Calu3 (cell line): ENCODE measurements at regions of chr3 and their contacts with region 1.

Region 1: DNA sequence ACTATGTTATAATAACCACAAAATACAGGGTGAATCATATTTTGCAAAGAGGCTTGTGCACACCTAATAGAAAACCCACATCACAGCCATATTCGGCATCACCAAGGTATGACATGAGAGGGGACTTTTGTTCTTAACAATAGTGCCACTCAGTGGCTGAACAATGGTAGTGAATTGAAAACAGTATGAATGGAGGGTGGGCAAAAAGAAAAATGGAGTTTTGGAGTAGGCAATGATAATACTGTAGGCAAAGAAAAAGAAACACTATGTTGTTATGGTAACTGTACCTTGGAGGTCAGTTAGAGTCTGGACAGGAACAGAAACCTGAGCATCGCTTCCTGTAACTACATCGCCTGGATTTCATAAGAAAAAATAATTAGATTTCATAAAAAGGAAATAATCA is 348.6 kb downstream of the PLCL2 start:
- DNase-seq: peak; percentile 20
- H3K4me3 Mint-ChIP-seq: no peak overlapping the region
- H3K27ac Mint-ChIP-seq: no peak overlapping the region
- H3K4me1 Mint-ChIP-seq: no peaks in the 10 kb centered on the region
- H3K27me3 Mint-ChIP-seq: no peaks in the 10 kb centered on the region
- CTCF ChIP-seq: peak; percentile 40

Region 2: DNA sequence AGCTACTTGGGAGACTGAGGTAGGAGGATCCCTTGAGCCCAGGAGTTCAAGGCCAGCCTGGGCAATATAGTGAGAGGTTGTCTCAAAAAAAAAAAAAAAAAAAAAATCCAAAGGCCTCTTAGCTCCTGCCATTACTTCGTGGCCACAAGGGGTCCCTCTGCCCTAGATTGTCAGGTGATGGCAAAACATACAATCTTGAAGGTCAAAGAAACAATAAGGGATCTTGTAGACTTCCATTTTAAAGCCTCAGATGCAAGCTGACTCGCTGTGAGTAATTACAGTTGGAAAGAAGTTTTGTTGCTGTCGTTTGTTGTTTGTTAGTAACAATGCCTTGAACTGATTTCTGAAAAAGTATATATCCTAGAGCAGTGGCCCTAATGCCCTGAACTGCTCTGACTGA is 404.6 kb before region 1 on chr3:
- CTCF ChIA-PET with region 1: no interaction called
- intact Hi-C with region 1: loop called (anchors 1 kb)
- DNase-seq: peak; percentile 47
- H3K4me3 Mint-ChIP-seq: no peak overlapping the region
- H3K27ac Mint-ChIP-seq: no peak overlapping the region
- H3K4me1 Mint-ChIP-seq: no peaks in the 10 kb centered on the region
- H3K27me3 Mint-ChIP-seq: no peaks in the 10 kb centered on the region
- CTCF ChIP-seq: no peak

Region 3: GRCh38 chr3:16884084-16884747 is 349.2 kb before region 1 on chr3:
- CTCF ChIA-PET with region 1: no interaction called
- intact Hi-C with region 1: loop called (anchors 10 kb)
- DNase-seq: peak; percentile 83
- H3K4me3 Mint-ChIP-seq: peak overlapping the region; percentile 79
- H3K27ac Mint-ChIP-seq: peak overlapping the region; percentile 31
- H3K4me1 Mint-ChIP-seq: peaks cover 15% of the 10 kb centered on the region
- H3K27me3 Mint-ChIP-seq: no peaks in the 10 kb centered on the region
- CTCF ChIP-seq: no peak

Region 4: GRCh38 chr3:17039580-17039979 is 193.8 kb before region 1 on chr3:
- CTCF ChIA-PET with region 1: no interaction called
- intact Hi-C with region 1: loop called (anchors 1 kb)
- DNase-seq: peak; percentile 42
- H3K4me3 Mint-ChIP-seq: no peak overlapping the region
- H3K27ac Mint-ChIP-seq: peak overlapping the region; percentile 54
- H3K4me1 Mint-ChIP-seq: peaks cover 19% of the 10 kb centered on the region
- H3K27me3 Mint-ChIP-seq: no peaks in the 10 kb centered on the region
- CTCF ChIP-seq: no peak

Region 5: DNA sequence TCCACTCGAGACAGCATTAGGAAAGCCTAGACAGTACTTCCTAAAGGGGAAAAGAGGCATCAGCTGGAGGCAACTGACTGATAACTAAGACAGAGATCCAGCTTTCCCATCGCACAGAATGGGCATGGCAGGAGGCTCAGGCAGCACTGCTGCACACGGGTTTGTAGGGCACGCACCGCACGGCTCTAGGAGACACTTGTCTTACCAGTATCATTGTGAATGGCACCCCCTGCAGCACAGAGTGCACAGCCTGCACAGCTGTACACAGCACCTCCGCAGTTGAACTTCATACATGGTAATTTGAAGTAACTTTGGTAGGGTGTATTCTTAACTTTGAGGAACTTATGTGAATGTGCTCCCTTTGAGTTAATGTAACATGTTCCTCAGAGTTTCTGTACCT is 67.0 kb before region 1 on chr3:
- CTCF ChIA-PET with region 1: no interaction called
- intact Hi-C with region 1: no loop called
- DNase-seq: no peak
- H3K4me3 Mint-ChIP-seq: no peak overlapping the region
- H3K27ac Mint-ChIP-seq: no peak overlapping the region
- H3K4me1 Mint-ChIP-seq: no peaks in the 10 kb centered on the region
- H3K27me3 Mint-ChIP-seq: no peaks in the 10 kb centered on the region
- CTCF ChIP-seq: no peak

Region 6: GRCh38 chr3:17183951-17184550 is 49.3 kb before region 1 on chr3:
- CTCF ChIA-PET with region 1: no interaction called
- intact Hi-C with region 1: no loop called
- DNase-seq: no peak
- H3K4me3 Mint-ChIP-seq: no peak overlapping the region
- H3K27ac Mint-ChIP-seq: peak overlapping the region; percentile 33
- H3K4me1 Mint-ChIP-seq: no peaks in the 10 kb centered on the region
- H3K27me3 Mint-ChIP-seq: no peaks in the 10 kb centered on the region
- CTCF ChIP-seq: no peak

Region 7: GRCh38 chr3:17724122-17724521 is 490.7 kb after region 1 on chr3:
- CTCF ChIA-PET with region 1: no interaction called
- intact Hi-C with region 1: no loop called
- DNase-seq: no peak
- H3K4me3 Mint-ChIP-seq: no peak overlapping the region
- H3K27ac Mint-ChIP-seq: no peak overlapping the region
- H3K4me1 Mint-ChIP-seq: no peaks in the 10 kb centered on the region
- H3K27me3 Mint-ChIP-seq: no peaks in the 10 kb centered on the region
- CTCF ChIP-seq: no peak